ENCODE measurements at regions of chr17 and their contacts with region 1.

Region 1: GRCh38 chr17:29369831-29370735 is 20.1 kb upstream of the TAOK1 start:
- DNase-seq: peak; percentile 78
- H3K4me3 ChIP-seq: peak overlapping the region in 1 of 4 donors; percentile 33
- H3K27ac ChIP-seq: peak overlapping the region; percentile 52 to 77 (median 62)
- H3K4me1 ChIP-seq: peaks cover 0 to 22% (median 9%) of the 10 kb centered on the region in 4 donors
- H3K27me3 ChIP-seq: no peaks in the 10 kb centered on the region
- CTCF ChIP-seq: peak; percentile 71 to 84 (median 76)
- EP300 ChIP-seq: no peak
- POLR2A ChIP-seq: no peak

Region 2: GRCh38 chr17:29102741-29103181 is 267.3 kb before region 1 on chr17:
- intact Hi-C with region 1: no loop called
- DNase-seq: no peak
- H3K4me3 ChIP-seq: no peak overlapping the region
- H3K27ac ChIP-seq: no peak overlapping the region
- H3K4me1 ChIP-seq: no peaks in the 10 kb centered on the region
- H3K27me3 ChIP-seq: no peaks in the 10 kb centered on the region
- CTCF ChIP-seq: no peak
- EP300 ChIP-seq: no peak
- POLR2A ChIP-seq: no peak

Region 3: GRCh38 chr17:29533976-29534375 is 163.9 kb after region 1 on chr17:
- intact Hi-C with region 1: loop called (anchors 1 kb)
- DNase-seq: no peak
- H3K4me3 ChIP-seq: no peak overlapping the region
- H3K27ac ChIP-seq: no peak overlapping the region
- H3K4me1 ChIP-seq: no peaks in the 10 kb centered on the region
- H3K27me3 ChIP-seq: no peaks in the 10 kb centered on the region
- CTCF ChIP-seq: no peak
- EP300 ChIP-seq: no peak
- POLR2A ChIP-seq: no peak

Measured in sigmoid colon (tissue), 7 donors.